Activated T-helper 2 cell treated with anti-CD3 and anti-CD28 coated beads, Interferon-gamma antibody, Interleukin-2, Interleukin-4, amounts not matched to agents 10 μg/mL and 5 μg/mL and 100 μg/mL, durations not matched to agents 14 hours and 24 hours and 36 hours (primary cell): ENCODE measurements at regions of chr1 and their contacts with region 1.

Region 1: GRCh38 chr1:35769759-35770446 is at the start of gene CLSPN:
- DNase-seq: peak; percentile 96
- H3K4me3 Mint-ChIP-seq: peak within 1 kb of the TSS; percentile 100
- H3K27ac Mint-ChIP-seq: peak within 1 kb of the TSS; percentile 96
- H3K4me1 Mint-ChIP-seq: peaks cover 18% of the 10 kb centered on the region
- H3K27me3 Mint-ChIP-seq: no peaks in the 10 kb centered on the region
- total RNA-seq, gene CLSPN: 55.2 and 55.8 TPM in 2 replicates

Region 2: GRCh38 chr1:35564037-35564883 is 205.6 kb before region 1 on chr1:
- intact Hi-C with region 1: loop called (anchors 1 kb)
- DNase-seq: peak; percentile 71
- H3K4me3 Mint-ChIP-seq: no peak overlapping the region
- H3K27ac Mint-ChIP-seq: no peak overlapping the region
- H3K4me1 Mint-ChIP-seq: peaks cover 21% of the 10 kb centered on the region
- H3K27me3 Mint-ChIP-seq: no peaks in the 10 kb centered on the region

Region 3: DNA sequence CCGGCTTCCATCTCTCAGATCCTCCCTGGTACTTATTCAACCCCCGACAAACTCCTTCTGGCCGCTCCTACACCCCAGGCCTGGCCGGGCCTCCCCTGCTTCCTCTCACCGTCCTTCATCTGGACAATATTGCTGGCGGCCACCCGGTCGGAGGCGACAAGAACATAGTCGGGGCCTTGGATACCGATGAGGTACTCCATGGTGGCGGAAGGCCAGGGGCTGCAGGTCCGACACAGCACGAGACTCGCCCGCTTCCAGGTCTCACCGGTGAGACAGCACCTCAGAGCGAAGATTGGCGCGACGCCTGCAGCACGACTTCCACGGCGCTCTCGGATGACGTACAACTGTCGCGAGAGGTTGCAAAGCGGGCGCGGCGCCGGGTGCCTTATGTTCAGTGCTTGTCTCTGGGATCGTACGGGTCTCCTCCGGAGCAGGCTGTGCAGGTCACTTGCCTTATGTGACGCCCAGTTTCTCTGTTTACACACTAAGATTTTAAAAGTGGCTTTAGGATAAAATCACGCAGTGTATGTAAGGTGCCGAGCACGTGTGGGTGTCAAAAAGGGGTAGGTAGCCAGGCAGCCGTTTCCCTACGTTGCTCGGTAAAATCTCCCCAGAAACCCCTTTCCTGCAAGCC is 128.6 kb before region 1 on chr1 and contains the start of gene PSMB2:
- intact Hi-C with region 1: loop called (anchors 10 kb)
- DNase-seq: peak; percentile 93
- H3K4me3 Mint-ChIP-seq: peak within 1 kb of the TSS; percentile 99
- H3K27ac Mint-ChIP-seq: peak within 1 kb of the TSS; percentile 98
- H3K4me1 Mint-ChIP-seq: peaks cover 31% of the 10 kb centered on the region
- H3K27me3 Mint-ChIP-seq: peaks cover 24% of the 10 kb centered on the region
- total RNA-seq, gene PSMB2: 123 and 124 TPM in 2 replicates

Region 4: GRCh38 chr1:35715568-35716002 is 54.3 kb before region 1 on chr1:
- intact Hi-C with region 1: loop called (anchors 5 kb)
- DNase-seq: peak; percentile 68
- H3K4me3 Mint-ChIP-seq: peak overlapping the region; percentile 57
- H3K27ac Mint-ChIP-seq: no peak overlapping the region
- H3K4me1 Mint-ChIP-seq: peaks cover 29% of the 10 kb centered on the region
- H3K27me3 Mint-ChIP-seq: no peaks in the 10 kb centered on the region

Region 5: DNA sequence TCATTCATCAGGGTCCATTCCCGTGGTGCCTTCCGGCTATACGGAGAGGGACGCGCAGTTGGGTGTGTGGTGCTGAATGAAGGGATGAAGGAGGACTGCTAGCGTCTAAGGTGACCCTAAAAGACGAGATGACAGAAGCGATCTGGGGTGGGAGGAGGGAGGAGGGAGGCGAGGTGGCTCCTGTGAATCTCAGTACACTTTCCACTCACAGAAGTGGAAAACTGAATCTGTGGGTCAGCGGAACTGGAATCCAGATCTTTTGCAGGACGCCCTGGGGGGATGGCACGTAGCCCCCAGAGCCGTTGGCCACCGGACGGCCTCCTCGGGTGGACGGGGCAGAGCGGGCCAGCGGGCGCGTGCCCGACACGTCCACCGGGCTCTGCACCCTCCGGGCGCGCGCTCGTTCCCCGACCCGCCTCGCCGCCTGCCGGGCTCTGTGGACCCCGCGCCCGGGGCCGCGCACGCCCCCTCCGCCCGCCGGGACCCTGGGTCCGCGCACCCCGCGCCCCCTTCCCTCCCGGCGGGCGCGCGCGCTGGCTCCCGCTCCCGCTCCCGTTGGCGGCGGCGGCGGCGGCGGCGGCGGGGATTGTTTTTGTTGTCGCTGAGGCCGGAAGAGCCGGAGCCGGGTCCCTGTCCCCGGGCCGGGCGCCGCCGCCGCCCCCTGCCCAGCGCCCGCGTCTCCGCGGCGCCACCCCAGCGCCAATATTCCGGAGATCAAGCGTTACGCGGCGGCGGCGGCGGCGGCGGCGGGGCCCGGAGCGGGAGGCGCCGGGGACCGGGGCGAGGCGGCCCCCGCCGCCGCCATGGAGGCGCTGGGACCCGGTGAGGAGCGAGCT is 37.9 kb after region 1 on chr1 and contains the start of gene AGO4:
- intact Hi-C with region 1: loop called (anchors 2 kb)
- DNase-seq: peak; percentile 16
- H3K4me3 Mint-ChIP-seq: peak within 1 kb of the TSS; percentile 89
- H3K27ac Mint-ChIP-seq: peak within 1 kb of the TSS; percentile 91
- H3K4me1 Mint-ChIP-seq: peaks cover 28% of the 10 kb centered on the region
- H3K27me3 Mint-ChIP-seq: no peaks in the 10 kb centered on the region
- total RNA-seq, gene AGO4: 9.2 and 10.0 TPM in 2 replicates